Ovary (tissue), 10 donors: ENCODE measurements at regions of chr9 and their contacts with region 1.

Region 1: DNA sequence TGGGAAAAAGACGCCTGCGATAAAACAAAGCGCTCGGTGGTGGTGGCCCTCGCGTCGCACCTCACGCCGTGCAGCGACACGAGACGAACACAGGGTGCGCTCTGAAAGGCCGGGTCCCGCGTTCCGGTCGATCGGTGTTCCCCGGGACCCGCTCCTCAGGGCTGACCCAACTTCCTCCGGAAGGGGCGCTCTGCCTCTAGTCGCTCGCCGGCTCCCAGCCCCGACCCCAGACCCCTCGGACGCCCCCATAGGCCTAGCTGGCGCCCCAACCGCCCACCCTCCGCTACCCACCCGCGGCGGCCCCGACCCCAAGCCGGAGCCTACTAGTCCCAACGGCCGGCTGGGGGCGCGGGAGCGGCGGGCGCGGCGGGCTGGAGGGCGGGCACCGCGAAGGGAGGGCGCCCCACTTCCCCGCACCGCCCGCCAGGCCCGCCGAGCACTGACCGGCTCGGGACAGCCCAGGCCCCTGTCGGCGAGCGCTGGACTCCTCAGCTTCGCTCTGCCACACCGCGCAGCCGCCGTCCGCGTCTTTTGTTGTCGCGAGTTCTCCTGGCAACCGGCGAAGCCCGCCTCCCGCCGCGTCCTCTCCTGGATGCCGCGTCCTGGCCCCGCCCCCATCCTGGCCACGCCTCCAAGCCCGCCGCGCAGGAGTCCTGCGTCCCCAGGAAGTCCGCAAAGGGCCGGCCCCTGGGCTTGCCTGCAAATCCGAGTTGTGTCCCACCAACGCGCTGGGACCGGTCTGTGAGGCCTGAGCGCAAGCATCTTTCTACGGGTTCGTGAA is at the start of gene KIF27:
- DNase-seq: peak; percentile 98 to 100 (median 99)
- H3K4me3 ChIP-seq: peak within 1 kb of the TSS; percentile 99
- H3K27ac ChIP-seq: peak within 1 kb of the TSS; percentile 84 to 90
- H3K4me1 ChIP-seq: peaks cover 1% of the 10 kb centered on the region
- H3K27me3 ChIP-seq: no peaks in the 10 kb centered on the region
- CTCF ChIP-seq: peak; percentile 7 to 74 (median 67)
- EP300 ChIP-seq: no peak
- POLR2A ChIP-seq: peak; percentile 92
- total RNA-seq, gene KIF27: 7.4 to 16.2 (median 10.4) TPM

Region 2: GRCh38 chr9:83979812-83980394 is 58.8 kb after region 1 on chr9 and contains the start of gene HNRNPK:
- intact Hi-C with region 1: loop called in 1 of 4 experiments (anchors 10 kb)
- DNase-seq: peak; percentile 99 to 100 (median 100)
- H3K4me3 ChIP-seq: peak within 1 kb of the TSS; percentile 94
- H3K27ac ChIP-seq: peak within 1 kb of the TSS; percentile 97 to 98
- H3K4me1 ChIP-seq: peaks cover 2% of the 10 kb centered on the region
- H3K27me3 ChIP-seq: no peaks in the 10 kb centered on the region
- CTCF ChIP-seq: no peak
- EP300 ChIP-seq: no peak
- POLR2A ChIP-seq: peak; percentile 4
- total RNA-seq, gene HNRNPK: 302 to 565 (median 485) TPM